ENCODE measurements at regions of chr10 and their contacts with region 1.

Region 1: DNA sequence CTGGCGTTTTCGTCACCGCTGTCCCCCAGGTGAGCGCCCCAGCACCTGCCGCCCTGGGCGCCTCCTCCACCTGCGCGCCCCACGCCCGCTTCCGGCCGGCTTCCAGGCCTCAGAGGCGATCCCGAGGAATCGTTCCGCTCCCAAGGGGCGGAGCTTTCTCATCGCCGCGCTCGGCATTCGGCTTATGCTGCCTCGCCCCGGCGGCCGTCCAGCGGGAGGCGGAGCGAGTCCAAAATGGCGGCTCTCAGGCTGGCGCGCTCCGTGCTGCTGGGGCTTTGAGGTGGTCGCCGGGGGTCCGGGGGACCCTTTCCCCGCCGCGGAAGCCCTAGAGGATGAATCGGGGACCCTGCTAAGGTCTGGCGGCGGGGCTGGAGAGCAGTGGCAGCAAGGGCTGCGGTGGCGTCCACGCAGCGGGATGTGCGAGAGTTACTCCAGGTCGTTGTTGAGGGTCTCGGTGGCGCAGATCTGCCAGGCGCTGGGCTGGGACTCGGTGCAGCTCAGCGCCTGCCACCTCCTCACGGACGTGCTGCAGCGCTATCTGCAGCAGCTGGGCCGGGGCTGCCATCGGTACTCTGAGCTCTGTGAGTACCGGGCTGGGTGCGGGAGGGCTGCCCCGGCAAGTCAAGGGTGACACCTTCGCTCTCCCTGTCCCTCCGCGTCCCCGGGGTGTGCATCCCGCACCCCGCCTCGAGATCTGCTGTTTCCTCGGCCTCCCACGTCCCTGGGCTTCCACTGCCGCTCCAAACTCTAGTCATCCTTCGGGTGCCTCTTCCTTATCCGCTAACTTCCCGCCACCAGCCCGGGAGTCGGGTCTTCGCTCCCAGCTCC is at the start of gene TAF3:
- DNase-seq: peak; percentile 95
- H3K4me3 Mint-ChIP-seq: peak within 1 kb of the TSS; percentile 85
- H3K27ac Mint-ChIP-seq: peak within 1 kb of the TSS; percentile 58
- H3K4me1 Mint-ChIP-seq: peaks cover 23% of the 10 kb centered on the region
- H3K27me3 Mint-ChIP-seq: no peaks in the 10 kb centered on the region
- CTCF ChIP-seq: no peak
- total RNA-seq, gene TAF3: 12.7 and 14.5 TPM in 2 replicates

Region 2: GRCh38 chr10:7797582-7797981 is 20.9 kb before region 1 on chr10:
- CTCF ChIA-PET with region 1: interaction called, 3 read pairs
- intact Hi-C with region 1: loop called (anchors 2 kb)
- DNase-seq: peak; percentile 54
- H3K4me3 Mint-ChIP-seq: no peak overlapping the region
- H3K27ac Mint-ChIP-seq: peak overlapping the region; percentile 60
- H3K4me1 Mint-ChIP-seq: peaks cover 45% of the 10 kb centered on the region
- H3K27me3 Mint-ChIP-seq: no peaks in the 10 kb centered on the region
- CTCF ChIP-seq: no peak